ENCODE measurements at regions of chr2 and their contacts with region 1.

Region 1: GRCh38 chr2:102806250-102806837 is 44.5 kb downstream of the TMEM182 start:
- DNase-seq: peak; percentile 76
- H3K4me3 Mint-ChIP-seq: no peak overlapping the region
- H3K27ac Mint-ChIP-seq: no peak overlapping the region
- H3K4me1 Mint-ChIP-seq: no peaks in the 10 kb centered on the region
- H3K27me3 Mint-ChIP-seq: no peaks in the 10 kb centered on the region
- CTCF ChIP-seq: peak; percentile 73

Region 2: GRCh38 chr2:102615622-102616436 is 190.5 kb before region 1 on chr2:
- CTCF ChIA-PET with region 1: interaction called, 5 read pairs
- POLR2A ChIA-PET with region 1: no interaction called
- intact Hi-C with region 1: loop called (anchors 10 kb)
- DNase-seq: peak; percentile 72
- H3K4me3 Mint-ChIP-seq: no peak overlapping the region
- H3K27ac Mint-ChIP-seq: no peak overlapping the region
- H3K4me1 Mint-ChIP-seq: no peaks in the 10 kb centered on the region
- H3K27me3 Mint-ChIP-seq: peaks cover 46% of the 10 kb centered on the region
- CTCF ChIP-seq: peak; percentile 93

Region 3: GRCh38 chr2:102753563-102754159 is 52.7 kb before region 1 on chr2:
- CTCF ChIA-PET with region 1: interaction called, 96 read pairs
- POLR2A ChIA-PET with region 1: no interaction called
- intact Hi-C with region 1: loop called (anchors 1 kb)
- DNase-seq: peak; percentile 56
- H3K4me3 Mint-ChIP-seq: no peak overlapping the region
- H3K27ac Mint-ChIP-seq: no peak overlapping the region
- H3K4me1 Mint-ChIP-seq: no peaks in the 10 kb centered on the region
- H3K27me3 Mint-ChIP-seq: no peaks in the 10 kb centered on the region
- CTCF ChIP-seq: peak; percentile 64

Region 4: DNA sequence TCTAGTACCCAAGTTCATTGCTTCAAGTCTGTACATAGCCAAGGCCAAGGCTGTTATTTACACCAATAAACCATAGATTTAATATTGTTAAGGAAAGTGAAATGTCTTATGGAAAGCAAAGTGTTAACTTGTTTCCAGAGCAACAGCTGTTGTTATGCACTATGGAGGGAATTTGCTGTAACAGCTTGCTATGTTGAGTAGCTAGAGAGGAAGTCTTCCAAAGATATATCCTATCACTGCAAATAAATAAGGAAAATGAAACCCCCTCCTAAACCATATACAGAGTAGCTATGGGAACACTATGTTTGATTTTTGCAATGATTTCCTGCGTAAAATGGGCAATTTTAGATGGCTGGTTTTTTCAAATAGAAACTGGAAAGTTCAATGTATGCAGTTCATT is 23.4 kb before region 1 on chr2:
- CTCF ChIA-PET with region 1: interaction called, 18 read pairs
- POLR2A ChIA-PET with region 1: no interaction called
- intact Hi-C with region 1: no loop called
- DNase-seq: no peak
- H3K4me3 Mint-ChIP-seq: no peak overlapping the region
- H3K27ac Mint-ChIP-seq: no peak overlapping the region
- H3K4me1 Mint-ChIP-seq: no peaks in the 10 kb centered on the region
- H3K27me3 Mint-ChIP-seq: no peaks in the 10 kb centered on the region
- CTCF ChIP-seq: no peak

Region 5: GRCh38 chr2:102796337-102796736 is 10.0 kb before region 1 on chr2:
- CTCF ChIA-PET with region 1: interaction called, 19 read pairs
- POLR2A ChIA-PET with region 1: interaction called, 3 read pairs
- intact Hi-C with region 1: no loop called
- DNase-seq: no peak
- H3K4me3 Mint-ChIP-seq: no peak overlapping the region
- H3K27ac Mint-ChIP-seq: no peak overlapping the region
- H3K4me1 Mint-ChIP-seq: no peaks in the 10 kb centered on the region
- H3K27me3 Mint-ChIP-seq: no peaks in the 10 kb centered on the region
- CTCF ChIP-seq: no peak